ENCODE measurements at regions of chr11 and their contacts with region 1.

Region 1: GRCh38 chr11:64204464-64204989 is 2.0 kb upstream of the FERMT3 start:
- DNase-seq: peak; percentile 88
- H3K4me3 Mint-ChIP-seq: peak overlapping the region; percentile 64
- H3K27ac Mint-ChIP-seq: peak overlapping the region; percentile 87
- H3K4me1 Mint-ChIP-seq: peaks cover 44% of the 10 kb centered on the region
- H3K27me3 Mint-ChIP-seq: no peaks in the 10 kb centered on the region

Region 2: GRCh38 chr11:64216879-64217278 is 12.4 kb after region 1 on chr11:
- CTCF ChIA-PET with region 1: interaction called, 4 read pairs
- POLR2A ChIA-PET with region 1: interaction called, 10 read pairs
- intact Hi-C with region 1: no loop called
- DNase-seq: no peak
- H3K4me3 Mint-ChIP-seq: no peak overlapping the region
- H3K27ac Mint-ChIP-seq: no peak overlapping the region
- H3K4me1 Mint-ChIP-seq: peaks cover 19% of the 10 kb centered on the region
- H3K27me3 Mint-ChIP-seq: no peaks in the 10 kb centered on the region

Region 3: DNA sequence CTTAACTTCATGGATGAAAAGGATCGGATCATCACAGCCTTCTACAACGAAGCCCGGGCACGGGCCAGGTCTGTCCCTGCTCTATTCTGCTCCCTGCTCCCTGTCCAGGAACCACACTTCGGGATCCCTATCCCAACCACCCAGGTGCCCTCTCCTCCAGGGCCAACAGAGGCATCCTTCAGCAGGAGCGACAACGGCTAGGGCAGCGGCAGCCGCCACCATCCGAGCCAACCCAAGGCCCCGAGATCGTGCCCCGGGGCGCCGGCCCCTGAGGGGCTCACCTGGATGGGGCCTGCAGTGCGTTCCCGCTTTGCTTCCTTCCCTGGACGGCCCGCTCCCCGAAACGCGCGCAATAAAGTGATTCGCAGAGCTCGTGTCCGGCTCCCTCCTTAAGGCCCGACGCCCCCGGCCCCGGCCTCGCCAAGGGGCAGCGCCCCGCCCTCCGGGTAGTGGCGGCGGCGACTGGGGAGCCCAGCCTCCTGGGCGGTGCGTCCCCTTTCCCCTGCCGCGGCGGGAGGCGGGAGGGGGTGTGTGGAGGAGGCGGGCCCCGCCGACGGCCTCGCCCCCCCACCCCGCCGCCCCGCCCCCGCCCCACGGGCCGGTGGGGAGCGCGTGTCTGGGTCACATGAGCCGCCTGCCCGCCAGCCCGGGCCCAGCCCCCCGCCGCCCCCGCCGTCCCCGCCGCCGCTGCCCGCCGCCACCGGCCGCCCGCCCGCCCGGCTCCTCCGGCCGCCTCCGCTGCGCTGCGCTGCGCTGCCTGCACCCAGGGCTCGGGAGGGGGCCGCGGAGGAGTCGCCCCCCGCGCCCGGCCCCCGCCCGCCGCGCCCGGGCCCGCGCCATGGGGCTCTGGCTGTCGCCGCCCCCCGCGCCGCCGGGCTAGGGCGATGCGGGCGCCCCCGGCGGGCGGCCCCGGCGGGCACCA is 29.6 kb after region 1 on chr11 and contains the start of gene VEGFB:
- CTCF ChIA-PET with region 1: interaction called, 14 read pairs
- POLR2A ChIA-PET with region 1: interaction called, 12 read pairs
- intact Hi-C with region 1: loop called (anchors 1 kb)
- DNase-seq: peak; percentile 74
- H3K4me3 Mint-ChIP-seq: peak within 1 kb of the TSS; percentile 83
- H3K27ac Mint-ChIP-seq: peak within 1 kb of the TSS; percentile 35
- H3K4me1 Mint-ChIP-seq: peaks cover 29% of the 10 kb centered on the region
- H3K27me3 Mint-ChIP-seq: no peaks in the 10 kb centered on the region
- total RNA-seq, gene VEGFB: 78.9 to 82.1 TPM

Region 4: GRCh38 chr11:64246871-64247728 is 42.6 kb after region 1 on chr11 and contains the start of gene PPP1R14B:
- CTCF ChIA-PET with region 1: interaction called, 9 read pairs
- POLR2A ChIA-PET with region 1: interaction called, 21 read pairs
- intact Hi-C with region 1: no loop called
- DNase-seq: peak; percentile 88
- H3K4me3 Mint-ChIP-seq: peak within 1 kb of the TSS; percentile 91
- H3K27ac Mint-ChIP-seq: peak within 1 kb of the TSS; percentile 90
- H3K4me1 Mint-ChIP-seq: peaks cover 36% of the 10 kb centered on the region
- H3K27me3 Mint-ChIP-seq: no peaks in the 10 kb centered on the region
- total RNA-seq, gene PPP1R14B: 238 to 242 TPM

Region 5: GRCh38 chr11:64317957-64318693 is 113.6 kb after region 1 on chr11 and contains the start of gene PRDX5:
- CTCF ChIA-PET with region 1: interaction called, 12 read pairs
- POLR2A ChIA-PET with region 1: interaction called, 24 read pairs
- intact Hi-C with region 1: no loop called
- DNase-seq: peak; percentile 97
- H3K4me3 Mint-ChIP-seq: peak within 1 kb of the TSS; percentile 92
- H3K27ac Mint-ChIP-seq: peak within 1 kb of the TSS; percentile 99
- H3K4me1 Mint-ChIP-seq: peaks cover 28% of the 10 kb centered on the region
- H3K27me3 Mint-ChIP-seq: no peaks in the 10 kb centered on the region
- total RNA-seq, gene PRDX5: 156 to 164 TPM

Measured in activated CD4-positive, alpha-beta memory T cell treated with anti-CD3 and anti-CD28 coated beads for 36 hours (primary cell).